GM23248 (cell line): ENCODE measurements at regions of chr1 and their contacts with region 1.

Region 1: DNA sequence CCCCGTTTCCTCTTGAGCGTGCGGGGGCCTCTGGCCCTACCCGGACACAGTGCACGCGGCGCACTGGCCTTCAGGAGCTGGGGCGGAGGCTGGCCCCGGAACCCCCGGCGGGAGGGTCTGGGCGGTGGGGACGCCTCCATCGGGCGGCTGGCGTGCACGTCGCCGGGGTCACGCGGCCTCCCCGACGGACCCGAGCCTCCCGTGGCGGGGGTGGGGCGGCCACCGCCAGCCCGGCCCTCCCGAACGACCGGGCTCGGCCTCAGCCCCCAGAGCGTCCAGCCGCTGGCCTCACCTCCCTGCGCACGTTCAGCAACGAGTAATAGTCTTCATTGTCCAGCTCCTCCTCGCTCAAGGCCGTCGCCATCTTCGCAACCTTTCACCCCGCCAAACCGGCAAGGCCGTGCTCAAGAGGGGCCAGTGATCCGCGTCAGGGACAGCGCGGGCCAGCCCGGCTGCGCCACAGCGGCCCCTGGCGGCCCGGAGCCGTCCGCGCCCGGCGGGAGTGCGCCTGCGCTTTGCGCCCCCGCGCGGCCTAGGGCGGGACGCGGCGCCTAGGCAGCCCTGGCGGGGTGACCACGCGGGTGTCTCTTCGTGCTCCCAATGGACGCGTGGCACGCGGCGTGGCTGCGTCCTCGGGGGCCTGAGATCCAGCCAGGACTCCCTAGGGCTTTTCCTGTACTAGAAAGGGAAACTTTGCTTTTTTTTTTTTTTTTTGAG is at the start of gene DNAJC11:
- DNase-seq: peak; percentile 95
- H3K4me3 ChIP-seq: peak within 1 kb of the TSS; percentile 82
- H3K27ac ChIP-seq: peak within 1 kb of the TSS; percentile 66
- H3K4me1 ChIP-seq: peaks cover 7% of the 10 kb centered on the region
- H3K27me3 ChIP-seq: no peaks in the 10 kb centered on the region
- total RNA-seq, gene DNAJC11: 23.4 and 28.9 TPM in 2 replicates

Region 2: DNA sequence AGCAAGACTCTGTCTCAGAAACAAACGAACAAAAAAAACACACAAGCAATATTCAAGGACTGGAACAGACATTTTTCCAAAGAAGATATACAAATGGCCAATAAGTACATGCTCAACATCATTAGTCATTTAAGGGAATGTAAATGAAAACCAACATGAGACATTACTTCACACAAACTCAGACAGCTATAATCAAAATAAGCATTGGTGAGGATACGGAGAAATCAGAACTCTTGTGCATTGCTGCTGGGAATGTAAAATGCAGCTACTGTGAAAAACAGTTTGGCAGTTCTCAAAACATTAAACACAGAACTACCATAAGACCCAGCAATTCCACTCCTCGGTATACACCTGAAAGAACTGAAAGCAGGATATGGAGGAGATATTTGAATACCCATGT is 162.6 kb before region 1 on chr1:
- in situ Hi-C with region 1: no loop called
- DNase-seq: peak; percentile 57
- H3K4me3 ChIP-seq: no peak overlapping the region
- H3K27ac ChIP-seq: peak overlapping the region; percentile 46
- H3K4me1 ChIP-seq: peaks cover 5% of the 10 kb centered on the region
- H3K27me3 ChIP-seq: no peaks in the 10 kb centered on the region

Region 3: DNA sequence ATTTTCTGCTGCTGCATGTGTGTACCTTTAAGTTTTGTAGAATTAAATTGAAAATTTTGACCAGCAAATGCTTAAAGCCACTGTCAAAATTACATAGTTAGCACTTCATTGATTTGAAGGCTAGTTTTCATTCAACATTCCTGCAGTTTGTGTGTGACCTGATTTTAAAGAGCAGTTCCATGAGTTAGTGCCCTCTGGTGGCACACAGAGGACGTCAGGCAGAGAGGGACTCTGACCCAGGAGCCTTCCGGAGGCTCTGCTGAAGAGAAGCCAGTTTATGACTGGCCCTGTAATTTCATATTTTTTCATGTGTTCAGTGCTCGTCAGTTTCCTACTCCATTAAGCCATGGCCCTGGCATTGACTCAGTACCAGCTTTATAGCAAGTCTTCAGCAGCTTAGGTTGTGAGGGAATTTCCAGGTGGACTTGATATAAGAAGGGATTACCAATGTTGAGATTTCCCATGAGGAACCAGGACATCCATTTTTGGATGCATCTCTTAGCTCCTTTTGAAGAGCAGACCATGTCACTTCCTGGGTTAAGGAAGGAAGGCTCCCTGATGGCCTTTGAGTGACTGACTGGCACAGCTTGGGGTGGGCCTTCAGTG is 188.4 kb after region 1 on chr1:
- in situ Hi-C with region 1: loop called (anchors 25 kb)
- DNase-seq: peak; percentile 82
- H3K4me3 ChIP-seq: no peak overlapping the region
- H3K27ac ChIP-seq: no peak overlapping the region
- H3K4me1 ChIP-seq: 0 out of 2 replicates have a peak, but pooled peaks cover 7% of the 10 kb centered on the region
- H3K27me3 ChIP-seq: no peaks in the 10 kb centered on the region

Region 4: GRCh38 chr1:6923955-6924881 is 222.6 kb after region 1 on chr1:
- in situ Hi-C with region 1: no loop called
- DNase-seq: no peak
- H3K4me3 ChIP-seq: no peak overlapping the region
- H3K27ac ChIP-seq: no peak overlapping the region
- H3K4me1 ChIP-seq: no peaks in the 10 kb centered on the region; the same call in 1 of the 2 replicates
- H3K27me3 ChIP-seq: peaks cover 4% of the 10 kb centered on the region; the same call in 1 of the 2 replicates